ENCODE measurements at regions of chr6 and their contacts with region 1.

Region 1: GRCh38 chr6:31087494-31088089 is 24.8 kb downstream of the C6orf15 start:
- DNase-seq: peak; percentile 75 to 86 (median 82)
- H3K4me3 ChIP-seq: no peak overlapping the region
- H3K4me3 Mint-ChIP-seq: peak overlapping the region in 1 of 8 donors; percentile 44
- H3K27ac ChIP-seq: no peak overlapping the region
- H3K27ac Mint-ChIP-seq: peak overlapping the region in 4 of 7 donors; percentile 32 to 58 (median 44)
- H3K4me1 ChIP-seq: peaks cover 16% of the 10 kb centered on the region
- H3K4me1 Mint-ChIP-seq: peaks cover 11 to 24% (median 18%) of the 10 kb centered on the region in 4 donors
- H3K27me3 ChIP-seq: no peaks in the 10 kb centered on the region
- H3K27me3 Mint-ChIP-seq: peaks cover 0 to 4% of the 10 kb centered on the region in 2 donors

Region 2: DNA sequence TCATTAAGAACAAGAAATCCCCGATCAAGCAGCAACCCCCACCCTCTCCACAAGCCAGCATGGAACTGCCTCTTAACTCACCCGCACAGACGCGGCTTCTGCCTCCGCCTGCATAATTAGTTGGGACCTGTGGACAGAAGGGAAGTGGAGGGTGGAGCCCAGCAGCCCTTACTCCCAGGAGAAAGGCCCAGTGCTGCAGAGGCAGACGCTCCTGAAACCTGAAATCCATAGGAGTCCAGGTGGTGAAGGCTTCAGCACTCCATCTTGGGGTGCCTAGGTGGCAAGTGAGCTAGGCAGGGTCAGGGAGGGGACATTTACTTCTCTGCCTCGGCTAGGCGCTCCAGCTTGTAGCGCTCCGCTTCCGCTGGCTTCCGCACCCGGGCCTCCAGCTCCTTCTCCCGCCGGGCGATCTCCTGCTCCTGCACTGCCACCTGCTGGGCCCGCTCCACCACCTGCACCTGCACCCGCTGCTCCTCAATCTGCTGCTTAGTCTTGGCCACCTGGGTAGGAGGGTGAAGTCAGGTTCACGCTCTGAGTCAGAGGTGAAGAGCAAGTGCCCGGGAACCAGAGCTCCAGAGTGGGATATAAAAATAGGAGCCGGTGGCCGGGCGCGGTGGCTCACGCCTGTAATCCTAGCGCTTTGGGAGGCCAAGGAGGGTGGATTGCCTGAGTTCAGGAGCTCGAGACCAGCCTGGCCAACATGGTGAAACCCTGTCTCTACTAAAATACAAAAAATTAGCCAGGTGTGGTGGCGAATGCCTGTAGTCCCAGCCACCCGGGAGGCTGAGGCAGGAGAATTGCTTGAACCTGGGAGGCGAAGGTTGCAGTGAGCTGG is 356.8 kb before region 1 on chr6:
- CTCF ChIA-PET with region 1: interaction called, 16 read pairs
- POLR2A ChIA-PET with region 1: no interaction called
- intact Hi-C with region 1: no loop called
- DNase-seq: peak; percentile 81 to 86 (median 82)
- H3K4me3 ChIP-seq: peak overlapping the region in 1 of 2 donors; percentile 35
- H3K4me3 Mint-ChIP-seq: peak overlapping the region in 6 of 8 donors; percentile 43 to 72 (median 58)
- H3K27ac ChIP-seq: no peak overlapping the region
- H3K27ac Mint-ChIP-seq: peak overlapping the region in 5 of 7 donors; percentile 69 to 84 (median 73)
- H3K4me1 ChIP-seq: peaks cover 23% of the 10 kb centered on the region
- H3K4me1 Mint-ChIP-seq: peaks cover 16 to 40% (median 31%) of the 10 kb centered on the region in 4 donors
- H3K27me3 ChIP-seq: no peaks in the 10 kb centered on the region
- H3K27me3 Mint-ChIP-seq: no peaks in the 10 kb centered on the region

Region 3: DNA sequence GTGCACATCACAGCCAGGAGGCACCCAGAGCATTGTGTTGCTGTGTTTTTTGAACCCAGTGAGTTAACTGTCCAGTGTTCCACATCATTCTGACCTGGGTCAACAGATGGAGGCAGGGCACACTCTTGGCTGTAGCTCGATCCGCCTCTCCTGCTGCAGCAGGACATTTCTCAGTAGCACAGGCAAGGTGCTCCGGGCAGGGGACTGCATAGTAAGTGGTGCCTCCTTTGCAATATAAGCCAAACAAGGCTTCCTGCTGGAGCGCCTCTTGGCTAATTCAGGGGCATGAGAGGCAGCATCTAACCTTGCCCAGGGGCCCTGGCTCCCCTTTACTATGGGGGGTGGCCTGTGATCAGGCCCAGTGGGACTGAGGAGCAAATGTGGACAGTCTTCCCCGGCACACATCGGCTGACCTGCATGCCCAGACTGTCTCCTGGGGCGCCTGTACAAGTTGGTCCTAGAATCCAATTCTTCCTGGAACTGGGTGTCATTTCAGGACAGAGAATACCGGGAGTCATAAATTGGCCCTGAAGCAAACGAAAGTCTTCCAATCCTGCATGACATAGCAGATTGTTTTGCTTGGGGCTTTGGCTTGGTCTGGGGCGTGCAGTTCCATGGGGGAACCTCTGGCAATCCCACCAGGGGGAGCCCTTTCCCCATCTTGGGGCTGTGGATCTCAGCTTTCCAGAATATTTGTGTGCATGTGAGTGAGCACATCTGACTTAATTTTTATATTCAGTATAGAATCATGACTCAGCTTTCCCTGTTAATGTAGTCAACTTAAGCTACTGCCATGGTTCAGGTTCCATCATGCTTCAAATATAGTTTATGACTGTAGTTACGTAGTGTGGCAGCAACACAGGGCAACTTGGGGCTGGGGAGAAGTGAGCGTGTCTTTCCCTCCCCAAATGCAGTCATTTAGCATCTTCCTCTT is 259.3 kb before region 1 on chr6:
- CTCF ChIA-PET with region 1: interaction called, 48 read pairs
- POLR2A ChIA-PET with region 1: interaction called, 4 read pairs
- intact Hi-C with region 1: loop called (anchors 1 kb)
- DNase-seq: peak; percentile 71 to 77 (median 73)
- H3K4me3 ChIP-seq: peak overlapping the region; percentile 68 to 88
- H3K4me3 Mint-ChIP-seq: peak overlapping the region; percentile 91 to 98 (median 94)
- H3K27ac ChIP-seq: peak overlapping the region; percentile 70
- H3K27ac Mint-ChIP-seq: peak overlapping the region; percentile 72 to 99 (median 95)
- H3K4me1 ChIP-seq: peaks cover 78% of the 10 kb centered on the region
- H3K4me1 Mint-ChIP-seq: peaks cover 56 to 93% (median 72%) of the 10 kb centered on the region in 4 donors
- H3K27me3 ChIP-seq: no peaks in the 10 kb centered on the region
- H3K27me3 Mint-ChIP-seq: no peaks in the 10 kb centered on the region

Region 4: DNA sequence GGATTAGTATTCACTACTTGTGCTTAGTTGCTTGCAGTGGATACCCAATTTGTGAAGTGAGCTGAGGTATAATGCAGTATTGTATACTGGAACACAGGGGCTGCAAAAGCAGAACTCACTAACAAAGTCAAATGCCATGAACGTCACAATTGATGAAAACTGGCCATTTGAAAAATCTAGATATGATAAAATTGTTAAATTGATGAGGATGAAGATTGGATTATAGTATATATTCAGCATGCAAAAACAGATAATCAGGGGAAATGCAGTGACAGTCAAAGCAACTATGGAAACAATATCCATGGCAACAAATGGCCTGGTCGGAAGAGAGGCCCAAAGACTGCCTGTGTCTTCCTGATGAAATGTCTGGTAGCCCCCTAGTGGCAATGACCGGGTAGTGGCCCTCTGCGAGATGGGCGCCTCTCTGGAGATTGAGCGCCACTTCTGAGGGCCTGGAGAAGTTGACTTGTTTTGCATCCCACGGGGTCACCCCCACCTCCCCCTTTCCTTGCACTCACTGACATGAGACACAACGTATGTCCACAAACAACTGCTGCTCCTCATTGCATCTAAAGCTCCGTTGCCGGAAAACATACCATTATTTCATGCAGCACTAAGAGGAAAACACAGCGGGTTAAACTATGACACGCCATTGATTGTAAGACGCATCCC is 18.8 kb before region 1 on chr6:
- CTCF ChIA-PET with region 1: interaction called, 35 read pairs
- POLR2A ChIA-PET with region 1: no interaction called
- intact Hi-C with region 1: loop called (anchors 1 kb)
- DNase-seq: peak; percentile 58 to 72 (median 66)
- H3K4me3 ChIP-seq: no peak overlapping the region
- H3K4me3 Mint-ChIP-seq: no peak overlapping the region
- H3K27ac ChIP-seq: no peak overlapping the region
- H3K27ac Mint-ChIP-seq: peak overlapping the region in 2 of 7 donors; percentile 12 to 17
- H3K4me1 ChIP-seq: no peaks in the 10 kb centered on the region
- H3K4me1 Mint-ChIP-seq: peaks cover 0 to 2% (median 0%) of the 10 kb centered on the region in 4 donors
- H3K27me3 ChIP-seq: no peaks in the 10 kb centered on the region
- H3K27me3 Mint-ChIP-seq: peaks cover 0 to 3% of the 10 kb centered on the region in 2 donors

Region 5: DNA sequence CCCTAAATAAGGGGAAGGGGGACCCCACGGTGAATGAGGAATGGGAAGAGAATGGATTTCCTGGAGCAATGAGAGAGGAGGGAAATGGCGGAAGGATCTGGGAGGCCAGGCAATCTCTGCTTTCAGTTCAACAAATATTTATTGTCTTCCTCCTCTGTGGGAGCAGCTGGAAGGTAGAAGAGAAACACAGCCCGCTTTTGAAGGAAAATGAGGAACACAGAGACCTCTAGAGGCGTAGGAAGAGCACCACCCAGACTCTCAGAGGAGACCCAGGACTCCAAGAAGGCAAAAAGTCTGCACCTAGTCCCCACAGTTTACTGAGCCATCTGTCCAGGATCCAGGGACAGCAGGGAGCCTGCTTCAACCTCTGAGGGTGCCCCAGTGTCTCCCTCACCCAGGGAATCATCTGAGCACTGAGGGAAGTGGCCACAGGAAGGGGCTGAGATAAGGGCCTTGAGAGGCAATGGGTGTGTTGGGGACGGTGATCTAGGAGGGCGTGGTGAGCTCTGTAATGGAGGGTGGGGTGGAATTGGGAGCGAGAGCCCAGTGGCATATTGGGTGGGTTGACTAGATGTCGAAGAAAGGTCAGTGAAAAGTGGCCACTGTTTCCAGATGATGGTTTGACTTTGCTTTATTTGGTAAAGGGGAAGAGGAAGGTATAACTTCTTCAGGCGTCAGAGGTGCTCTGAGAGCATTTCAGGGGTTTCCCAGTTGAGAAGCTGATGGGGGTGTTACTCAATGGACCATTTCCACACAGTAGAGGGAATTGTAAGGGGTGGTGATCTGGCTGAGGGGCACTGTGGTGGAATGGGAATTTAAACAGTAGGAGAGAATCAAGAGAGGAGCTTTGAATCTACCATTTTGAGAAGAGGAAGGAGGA is 27.6 kb after region 1 on chr6:
- CTCF ChIA-PET with region 1: interaction called, 62 read pairs
- POLR2A ChIA-PET with region 1: interaction called, 11 read pairs
- intact Hi-C with region 1: loop called (anchors 2 kb)
- DNase-seq: peak in 1 of 5 donors; percentile 40
- H3K4me3 ChIP-seq: no peak overlapping the region
- H3K4me3 Mint-ChIP-seq: peak overlapping the region in 2 of 8 donors; percentile 16 to 41
- H3K27ac ChIP-seq: no peak overlapping the region
- H3K27ac Mint-ChIP-seq: peak overlapping the region in 4 of 7 donors; percentile 12 to 80 (median 46)
- H3K4me1 ChIP-seq: peaks cover 5% of the 10 kb centered on the region
- H3K4me1 Mint-ChIP-seq: peaks cover 2 to 8% (median 5%) of the 10 kb centered on the region in 4 donors
- H3K27me3 ChIP-seq: no peaks in the 10 kb centered on the region
- H3K27me3 Mint-ChIP-seq: peaks cover 2 to 3% of the 10 kb centered on the region in 2 donors